GM12878 (cell line): ENCODE measurements at regions of chr1 and their contacts with region 1.

Region 1: GRCh38 chr1:8477166-8477982 is 159.5 kb downstream of the SLC45A1 start:
- DNase-seq: peak; percentile 93
- ATAC-seq: peak; percentile 87
- H3K4me3 ChIP-seq: no peak overlapping the region
- H3K27ac ChIP-seq: peak overlapping the region; percentile 1; the same call in 1 of the 2 replicates
- H3K4me1 ChIP-seq: peaks cover 53% of the 10 kb centered on the region
- H3K27me3 ChIP-seq: no peaks in the 10 kb centered on the region
- CTCF ChIP-seq: no peak
- EP300 ChIP-seq: peak; percentile 33 to 75; a peak in 1 of 4 replicates
- POLR2A ChIP-seq: no peak
- RAD21 ChIP-seq: no peak

Region 2: GRCh38 chr1:8314346-8315280 is 162.8 kb before region 1 on chr1:
- CTCF ChIA-PET with region 1: no interaction called
- POLR2A ChIA-PET with region 1: no interaction called
- RAD21 ChIA-PET with region 1: no interaction called
- SMC1A ChIA-PET with region 1: no interaction called
- in situ Hi-C with region 1: no loop called
- intact Hi-C with region 1: no loop called
- DNase-seq: peak; percentile 11
- ATAC-seq: peak; percentile 88
- H3K4me3 ChIP-seq: no peak overlapping the region
- H3K27ac ChIP-seq: no peak overlapping the region
- H3K4me1 ChIP-seq: no peaks in the 10 kb centered on the region
- H3K27me3 ChIP-seq: peaks cover 0 to 4% of the 10 kb centered on the region in 2 experiments; a peak in 1 of 4 replicates
- CTCF ChIP-seq: peak; percentile 80 to 94 (median 89)
- EP300 ChIP-seq: no peak
- POLR2A ChIP-seq: no peak
- RAD21 ChIP-seq: peak; percentile 98

Region 3: GRCh38 chr1:8423650-8424538 is 53.5 kb before region 1 on chr1:
- CTCF ChIA-PET with region 1: interaction called, 6 read pairs
- POLR2A ChIA-PET with region 1: interaction called, 15 read pairs
- RAD21 ChIA-PET with region 1: interaction called, 33 read pairs
- SMC1A ChIA-PET with region 1: interaction called, 24 read pairs
- in situ Hi-C with region 1: no loop called
- intact Hi-C with region 1: loop called (anchors 2 kb)
- DNase-seq: no peak
- ATAC-seq: peak; percentile 54
- H3K4me3 ChIP-seq: peak overlapping the region; percentile 79
- H3K27ac ChIP-seq: peak overlapping the region; percentile 79
- H3K4me1 ChIP-seq: peaks cover 39% of the 10 kb centered on the region
- H3K27me3 ChIP-seq: no peaks in the 10 kb centered on the region
- CTCF ChIP-seq: no peak
- EP300 ChIP-seq: 0 out of 4 replicates have a peak, but pooled peaks of 1 of the 2 experiments have one; percentile 40
- POLR2A ChIP-seq: peak; percentile 63
- RAD21 ChIP-seq: 0 out of 2 replicates have a peak, but pooled peaks have one; percentile 7

Region 4: DNA sequence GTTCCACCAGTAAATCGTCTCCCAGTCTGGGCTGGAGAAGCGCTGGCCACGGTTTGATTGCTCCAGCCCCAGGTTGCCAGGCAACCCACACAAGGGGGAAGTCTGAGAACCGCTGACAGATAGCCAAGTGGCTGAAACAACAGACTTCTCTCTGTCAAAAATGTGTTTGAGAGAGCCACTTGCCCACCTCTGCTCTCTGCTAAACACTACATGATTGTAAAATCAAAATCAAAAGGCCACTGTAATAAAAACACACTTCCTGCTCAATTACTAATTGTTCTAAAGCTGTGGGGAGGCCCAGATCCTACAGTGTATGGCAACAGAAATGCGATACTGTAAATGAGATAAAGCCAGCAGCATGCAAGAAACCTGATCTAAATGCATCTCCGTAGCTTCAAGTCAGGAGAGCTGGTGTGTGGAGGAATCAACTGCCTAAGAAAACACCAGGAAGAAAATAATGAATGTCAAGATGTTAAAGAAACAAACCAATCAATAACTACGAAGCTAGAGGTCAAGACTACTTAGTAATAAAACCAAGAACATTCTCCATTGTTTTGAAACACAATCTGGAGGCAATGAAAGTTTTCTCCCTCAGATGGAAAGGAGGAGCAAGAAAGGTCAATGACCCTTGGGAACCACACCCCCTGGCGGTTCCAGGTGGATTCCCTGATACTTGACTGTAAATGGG is 38.2 kb before region 1 on chr1:
- CTCF ChIA-PET with region 1: no interaction called
- POLR2A ChIA-PET with region 1: interaction called, 3 read pairs
- RAD21 ChIA-PET with region 1: interaction called, 3 read pairs
- SMC1A ChIA-PET with region 1: interaction called, 10 read pairs
- in situ Hi-C with region 1: no loop called
- intact Hi-C with region 1: no loop called
- DNase-seq: no peak
- ATAC-seq: peak; percentile 95
- H3K4me3 ChIP-seq: no peak overlapping the region
- H3K27ac ChIP-seq: no peak overlapping the region
- H3K4me1 ChIP-seq: peaks cover 7% of the 10 kb centered on the region
- H3K27me3 ChIP-seq: no peaks in the 10 kb centered on the region
- CTCF ChIP-seq: no peak
- EP300 ChIP-seq: no peak
- POLR2A ChIP-seq: no peak
- RAD21 ChIP-seq: no peak

Region 5: GRCh38 chr1:8510041-8510823 is 32.9 kb after region 1 on chr1:
- CTCF ChIA-PET with region 1: no interaction called
- POLR2A ChIA-PET with region 1: interaction called, 6 read pairs
- RAD21 ChIA-PET with region 1: interaction called, 7 read pairs
- SMC1A ChIA-PET with region 1: interaction called, 12 read pairs
- in situ Hi-C with region 1: no loop called
- intact Hi-C with region 1: no loop called
- DNase-seq: no peak
- ATAC-seq: peak; percentile 85
- H3K4me3 ChIP-seq: peak overlapping the region; percentile 52; the same call in 1 of the 2 replicates
- H3K27ac ChIP-seq: peak overlapping the region; percentile 60
- H3K4me1 ChIP-seq: peaks cover 16% of the 10 kb centered on the region
- H3K27me3 ChIP-seq: no peaks in the 10 kb centered on the region
- CTCF ChIP-seq: no peak
- EP300 ChIP-seq: no peak
- POLR2A ChIP-seq: no peak
- RAD21 ChIP-seq: no peak

Region 6: GRCh38 chr1:8533124-8533523 is 55.8 kb after region 1 on chr1:
- CTCF ChIA-PET with region 1: interaction called, 6 read pairs
- POLR2A ChIA-PET with region 1: interaction called, 3 read pairs
- RAD21 ChIA-PET with region 1: interaction called, 8 read pairs
- SMC1A ChIA-PET with region 1: interaction called, 16 read pairs
- in situ Hi-C with region 1: no loop called
- intact Hi-C with region 1: loop called (anchors 5 kb)
- DNase-seq: no peak
- ATAC-seq: peak; percentile 94
- H3K4me3 ChIP-seq: peak overlapping the region; percentile 50
- H3K27ac ChIP-seq: peak overlapping the region; percentile 79
- H3K4me1 ChIP-seq: peaks cover 34% of the 10 kb centered on the region
- H3K27me3 ChIP-seq: no peaks in the 10 kb centered on the region
- CTCF ChIP-seq: no peak
- EP300 ChIP-seq: no peak
- POLR2A ChIP-seq: no peak
- RAD21 ChIP-seq: no peak